ENCODE measurements at regions of chr14 and their contacts with region 1.

Region 1: DNA sequence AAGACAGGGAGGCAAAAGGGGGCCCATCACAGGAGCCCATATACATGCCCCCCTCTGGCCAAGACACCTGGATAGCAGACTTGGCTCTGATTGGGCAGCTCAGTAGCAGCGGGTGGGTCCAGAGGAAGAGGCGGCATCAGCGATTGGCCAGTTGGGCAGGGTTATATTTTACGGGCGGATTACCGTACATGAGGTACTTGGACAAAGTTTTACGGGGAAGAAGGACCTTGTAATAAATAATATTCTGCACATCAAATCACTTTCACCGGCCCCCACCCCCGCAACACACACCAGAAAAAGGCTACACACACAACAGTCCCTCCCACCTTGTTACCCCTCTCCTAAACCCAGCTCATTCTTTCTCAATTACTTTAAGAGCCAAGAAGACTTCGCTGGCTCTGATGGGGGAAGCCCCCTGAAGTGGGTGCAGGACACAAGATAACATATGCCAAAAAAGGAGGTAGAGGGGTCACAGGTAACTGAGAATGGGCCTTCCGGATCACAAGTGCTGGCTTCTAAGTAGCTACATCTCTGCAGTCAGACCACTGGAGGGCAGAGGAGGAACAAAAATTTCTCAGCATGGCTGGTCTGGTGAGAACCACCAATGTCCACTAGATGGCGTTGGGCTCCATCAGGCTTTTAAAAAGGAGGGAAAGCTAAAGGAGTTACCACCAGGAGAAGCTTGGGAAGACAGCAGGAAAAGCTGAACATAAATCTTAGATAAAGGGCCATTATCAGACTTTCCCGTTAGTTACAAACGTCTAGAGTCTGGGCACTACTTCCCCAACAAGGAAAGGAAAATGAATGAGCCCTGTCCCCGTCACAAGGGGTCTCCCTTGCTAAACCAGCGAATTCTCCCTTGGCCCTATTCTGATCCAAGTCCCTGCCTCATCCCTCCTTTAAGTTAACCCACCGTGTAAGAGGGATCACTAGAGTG is 11.4 kb upstream of the CDH24 start:
- DNase-seq: no peak
- ATAC-seq: peak; percentile 85
- H3K4me3 Mint-ChIP-seq: peak overlapping the region; percentile 22
- H3K27ac Mint-ChIP-seq: peak overlapping the region; percentile 50
- H3K4me1 Mint-ChIP-seq: peaks cover 36% of the 10 kb centered on the region
- H3K27me3 Mint-ChIP-seq: no peaks in the 10 kb centered on the region
- CTCF ChIP-seq: peak; percentile 79

Region 2: GRCh38 chr14:23186913-23187654 is 118.3 kb after region 1 on chr14:
- CTCF ChIA-PET with region 1: interaction called, 18 read pairs
- POLR2A ChIA-PET with region 1: no interaction called
- intact Hi-C with region 1: loop called (anchors 2 kb)
- DNase-seq: no peak
- ATAC-seq: peak; percentile 45
- H3K4me3 Mint-ChIP-seq: no peak overlapping the region
- H3K27ac Mint-ChIP-seq: no peak overlapping the region
- H3K4me1 Mint-ChIP-seq: no peaks in the 10 kb centered on the region
- H3K27me3 Mint-ChIP-seq: peaks cover 2% of the 10 kb centered on the region
- CTCF ChIP-seq: no peak

Measured in activated B cell treated with CpG ODN at 0.5 μM for 24 hours (primary cell).